ENCODE measurements at regions of chr1 and their contacts with region 1.

Region 1: GRCh38 chr1:210400043-210400840 is 71.5 kb downstream of the HHAT start:
- DNase-seq: peak; percentile 66 to 67
- H3K4me3 ChIP-seq: no peak overlapping the region
- H3K27ac ChIP-seq: no peak overlapping the region
- H3K4me1 ChIP-seq: no peaks in the 10 kb centered on the region
- H3K27me3 ChIP-seq: no peaks in the 10 kb centered on the region
- CTCF ChIP-seq: peak; percentile 69 to 95 (median 82)
- POLR2A ChIP-seq: no peak

Region 2: GRCh38 chr1:210143465-210144062 is 256.7 kb before region 1 on chr1:
- intact Hi-C with region 1: loop called (anchors 10 kb)
- DNase-seq: peak; percentile 78 to 81
- H3K4me3 ChIP-seq: no peak overlapping the region
- H3K27ac ChIP-seq: no peak overlapping the region
- H3K4me1 ChIP-seq: no peaks in the 10 kb centered on the region
- H3K27me3 ChIP-seq: no peaks in the 10 kb centered on the region
- CTCF ChIP-seq: peak; percentile 11 to 69 (median 49)
- POLR2A ChIP-seq: no peak

Region 3: GRCh38 chr1:210358626-210359025 is 41.6 kb before region 1 on chr1:
- intact Hi-C with region 1: loop called (anchors 5 kb)
- DNase-seq: no peak
- H3K4me3 ChIP-seq: no peak overlapping the region
- H3K27ac ChIP-seq: no peak overlapping the region
- H3K4me1 ChIP-seq: peaks cover 15 to 24% of the 10 kb centered on the region in 2 donors
- H3K27me3 ChIP-seq: no peaks in the 10 kb centered on the region
- CTCF ChIP-seq: no peak
- POLR2A ChIP-seq: no peak

Measured in thyroid gland (tissue), 4 donors.